ENCODE measurements at regions of chr7 and their contacts with region 1.

Region 1: DNA sequence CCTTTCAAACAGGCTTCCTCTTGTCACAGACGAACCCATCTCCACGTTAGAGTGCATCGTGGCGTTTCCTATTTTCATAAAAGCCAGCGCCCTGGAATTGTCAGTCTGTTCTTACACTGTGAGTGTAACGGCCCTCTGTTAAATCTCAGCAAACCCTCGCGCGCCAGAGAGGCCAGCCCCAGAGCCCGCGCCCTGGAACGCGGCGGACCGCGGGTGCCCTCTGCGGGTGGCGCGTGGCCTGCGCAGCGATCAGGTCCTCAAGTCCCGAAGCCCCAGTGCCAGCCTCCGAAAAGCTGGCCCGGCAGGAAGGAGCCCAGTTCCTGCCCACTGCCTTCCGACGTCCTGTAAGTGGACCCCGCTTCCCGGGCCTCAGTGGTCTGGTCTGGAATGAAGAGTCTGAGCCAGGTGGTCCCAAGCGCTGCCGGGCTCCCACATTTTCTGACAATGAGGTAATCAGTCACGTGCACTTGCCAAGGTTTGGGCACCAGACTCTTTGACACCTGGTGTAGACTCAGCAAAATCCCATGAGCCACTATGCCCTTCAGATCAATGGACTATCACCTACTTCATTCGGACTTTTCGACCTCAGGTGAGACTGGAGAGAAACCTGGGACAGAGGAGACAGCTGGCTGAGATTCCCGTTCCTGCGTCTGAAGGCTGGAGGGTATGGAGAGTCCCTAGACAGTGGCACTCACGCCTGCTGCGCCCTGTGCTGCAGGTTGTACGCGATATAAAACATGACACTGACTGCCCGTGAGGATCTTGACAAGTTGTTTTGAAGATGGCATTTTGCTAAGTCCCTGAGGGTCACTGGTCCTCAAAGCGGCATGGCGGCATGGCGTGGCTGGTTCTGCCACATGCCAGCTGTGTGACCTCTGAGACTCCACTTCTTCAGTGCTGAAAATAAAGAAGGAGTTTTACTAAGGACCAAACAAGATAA is 109.4 kb upstream of the LANCL2 start:
- DNase-seq: no peak
- H3K4me3 ChIP-seq: peak overlapping the region; percentile 68
- CTCF ChIP-seq: peak; percentile 96

Region 2: GRCh38 chr7:54802841-54803240 is 452.9 kb before region 1 on chr7:
- CTCF ChIA-PET with region 1: interaction called, 33 read pairs
- POLR2A ChIA-PET with region 1: no interaction called
- DNase-seq: no peak
- H3K4me3 ChIP-seq: no peak overlapping the region
- CTCF ChIP-seq: no peak

Region 3: GRCh38 chr7:55030314-55030713 is 225.5 kb before region 1 on chr7:
- CTCF ChIA-PET with region 1: interaction called, 68 read pairs
- POLR2A ChIA-PET with region 1: no interaction called
- DNase-seq: no peak
- H3K4me3 ChIP-seq: no peak overlapping the region
- CTCF ChIP-seq: no peak

Region 4: DNA sequence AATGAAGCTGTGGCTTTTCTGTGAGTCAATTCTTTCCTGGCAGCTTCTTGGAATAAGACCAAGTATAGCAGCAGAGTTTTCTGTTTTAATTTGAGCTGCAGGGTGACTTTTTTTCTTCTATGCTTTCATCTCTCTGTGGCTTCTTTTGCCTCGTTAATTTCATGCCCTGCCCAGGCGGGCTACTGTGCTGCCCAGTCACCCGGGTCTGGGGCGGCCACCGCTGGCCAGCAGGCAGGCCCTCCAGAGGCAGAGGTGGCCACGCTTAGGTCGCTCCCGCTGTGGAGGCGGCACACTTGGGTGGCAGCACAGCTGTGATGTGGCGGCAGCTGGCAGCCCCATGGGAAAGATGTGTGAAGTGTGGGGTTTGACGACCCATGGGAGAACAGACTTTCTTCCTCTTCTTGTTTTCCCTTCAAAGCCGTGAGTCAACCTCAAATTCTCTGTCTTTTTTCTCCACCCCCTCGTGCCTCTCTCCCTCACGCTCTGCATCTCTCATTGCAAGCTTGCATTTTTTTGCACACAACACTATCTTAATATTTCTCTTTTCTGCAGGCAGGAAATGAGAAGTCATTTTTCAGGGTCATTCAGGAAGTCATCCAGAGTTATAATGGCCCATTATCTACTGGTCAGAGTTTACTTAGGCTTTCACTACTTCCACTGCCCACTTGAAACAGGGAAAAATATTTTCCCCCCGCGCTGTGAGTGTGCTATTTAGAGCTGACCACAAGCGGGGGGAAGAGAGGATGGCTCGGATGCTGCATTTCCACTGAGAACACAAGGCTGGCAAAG is 169.2 kb before region 1 on chr7:
- CTCF ChIA-PET with region 1: interaction called, 12 read pairs
- POLR2A ChIA-PET with region 1: no interaction called
- DNase-seq: peak; percentile 40
- H3K4me3 ChIP-seq: peak overlapping the region; percentile 49
- CTCF ChIP-seq: no peak

Region 5: GRCh38 chr7:55144333-55145317 is 111.1 kb before region 1 on chr7:
- CTCF ChIA-PET with region 1: interaction called, 21 read pairs
- POLR2A ChIA-PET with region 1: no interaction called
- DNase-seq: no peak
- H3K4me3 ChIP-seq: no peak overlapping the region
- CTCF ChIP-seq: peak; percentile 33

Region 6: GRCh38 chr7:55265836-55266642 is 10.3 kb after region 1 on chr7:
- CTCF ChIA-PET with region 1: interaction called, 49 read pairs
- POLR2A ChIA-PET with region 1: no interaction called
- DNase-seq: no peak
- H3K4me3 ChIP-seq: no peak overlapping the region
- CTCF ChIP-seq: no peak

Measured in AG04449 (cell line).